ENCODE measurements at regions of chr10 and their contacts with region 1.

Region 1: GRCh38 chr10:58952747-58953466 is 223.5 kb upstream of the PHYHIPL start:
- DNase-seq: peak in 1 of 2 donors; percentile 18
- ATAC-seq: peak; percentile 46 to 59
- H3K4me3 ChIP-seq: no peak overlapping the region
- H3K27ac ChIP-seq: peak overlapping the region; percentile 33 to 53 (median 46)
- H3K4me1 ChIP-seq: peaks cover 6 to 31% of the 10 kb centered on the region in 2 donors
- H3K27me3 ChIP-seq: no peaks in the 10 kb centered on the region
- CTCF ChIP-seq: peak; percentile 61 to 83 (median 73)
- POLR2A ChIP-seq: no peak

Region 2: DNA sequence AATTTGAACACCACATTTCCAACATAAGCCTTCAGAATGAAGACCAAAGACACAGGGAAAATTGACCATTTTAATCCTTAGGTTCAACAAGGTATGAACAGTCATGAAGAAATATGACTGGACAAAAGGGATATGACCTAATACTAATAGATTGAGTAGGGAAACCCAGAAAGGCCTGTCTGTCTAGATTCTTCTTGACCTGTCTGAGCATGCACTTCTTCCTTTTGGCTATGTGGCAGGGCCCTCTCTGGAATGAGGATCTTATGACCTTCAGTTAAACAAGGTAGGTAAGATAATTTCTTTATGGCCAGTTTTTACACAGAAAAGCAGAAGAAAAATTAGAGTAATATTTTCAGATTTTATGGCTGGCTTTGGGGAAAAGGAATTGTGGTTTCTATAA is 220.5 kb after region 1 on chr10:
- in situ Hi-C with region 1: loop called in 1 of 4 experiments (anchors 25 kb)
- intact Hi-C with region 1: no loop called
- DNase-seq: no peak
- ATAC-seq: no peak
- H3K4me3 ChIP-seq: no peak overlapping the region
- H3K27ac ChIP-seq: no peak overlapping the region
- H3K4me1 ChIP-seq: peaks cover 0 to 5% of the 10 kb centered on the region in 2 donors
- H3K27me3 ChIP-seq: peaks cover 8 to 27% (median 18%) of the 10 kb centered on the region in 3 donors
- CTCF ChIP-seq: no peak
- POLR2A ChIP-seq: no peak

Region 3: DNA sequence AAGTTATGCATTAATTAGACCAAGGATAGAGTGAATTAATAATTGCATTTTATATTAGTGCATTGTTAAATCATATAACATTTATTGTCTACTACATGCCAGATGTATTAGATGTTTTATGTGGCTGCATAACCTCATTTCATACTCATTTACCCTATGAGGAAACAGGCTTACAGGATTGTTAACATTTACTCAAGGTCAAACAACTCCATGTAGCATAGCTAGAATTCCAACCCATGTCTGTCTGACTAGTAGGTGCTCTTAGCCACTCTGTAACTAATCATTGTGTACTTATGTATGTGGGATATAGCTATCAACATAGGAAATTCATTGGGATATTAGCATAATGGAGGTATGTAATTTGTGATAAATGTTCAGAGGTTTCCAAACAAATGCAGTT is 269.9 kb after region 1 on chr10:
- in situ Hi-C with region 1: loop called in 1 of 4 experiments (anchors 25 kb)
- intact Hi-C with region 1: no loop called
- DNase-seq: no peak
- ATAC-seq: no peak
- H3K4me3 ChIP-seq: no peak overlapping the region
- H3K27ac ChIP-seq: no peak overlapping the region
- H3K4me1 ChIP-seq: no peaks in the 10 kb centered on the region
- H3K27me3 ChIP-seq: no peaks in the 10 kb centered on the region
- CTCF ChIP-seq: no peak
- POLR2A ChIP-seq: no peak

Region 4: GRCh38 chr10:59465088-59465487 is 512.2 kb after region 1 on chr10:
- in situ Hi-C with region 1: loop called in 1 of 4 experiments (anchors 25 kb)
- intact Hi-C with region 1: no loop called
- DNase-seq: peak in 1 of 2 donors; percentile 8
- ATAC-seq: peak; percentile 86 to 89
- H3K4me3 ChIP-seq: no peak overlapping the region
- H3K27ac ChIP-seq: no peak overlapping the region
- H3K4me1 ChIP-seq: peaks cover 0 to 11% of the 10 kb centered on the region in 2 donors
- H3K27me3 ChIP-seq: no peaks in the 10 kb centered on the region
- CTCF ChIP-seq: peak; percentile 51 to 61 (median 57)
- POLR2A ChIP-seq: no peak